Activated CD4-positive, alpha-beta memory T cell treated with anti-CD3 and anti-CD28 coated beads for 36 hours (primary cell): ENCODE measurements at regions of chr21 and their contacts with region 1.

Region 1: DNA sequence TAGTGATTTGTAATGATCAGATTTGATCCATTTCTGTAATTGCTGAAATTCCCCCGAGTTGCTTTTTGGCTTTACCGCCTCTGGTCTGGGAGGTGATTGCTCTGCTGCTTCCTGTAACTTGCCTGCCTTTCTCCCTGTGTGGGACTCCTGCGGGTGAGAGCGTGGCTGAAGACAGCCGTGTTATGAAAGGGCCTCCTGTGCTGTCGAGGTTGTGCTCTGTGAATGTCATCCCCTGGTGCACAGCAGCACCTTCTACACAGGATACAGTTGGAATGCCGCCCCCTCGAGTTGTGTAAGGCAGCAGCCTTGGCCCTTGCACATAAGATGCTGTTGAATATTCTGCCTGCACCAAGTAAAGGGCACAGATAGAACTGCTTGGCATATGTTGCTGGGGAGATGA is 5.9 kb downstream of the SOD1 start:
- DNase-seq: peak; percentile 70
- H3K4me3 Mint-ChIP-seq: no peak overlapping the region
- H3K27ac Mint-ChIP-seq: peak overlapping the region; percentile 57
- H3K4me1 Mint-ChIP-seq: peaks cover 93% of the 10 kb centered on the region
- H3K27me3 Mint-ChIP-seq: no peaks in the 10 kb centered on the region

Region 2: GRCh38 chr21:31530897-31531705 is 134.3 kb before region 1 on chr21:
- CTCF ChIA-PET with region 1: no interaction called
- POLR2A ChIA-PET with region 1: no interaction called
- intact Hi-C with region 1: no loop called
- DNase-seq: no peak
- H3K4me3 Mint-ChIP-seq: no peak overlapping the region
- H3K27ac Mint-ChIP-seq: no peak overlapping the region
- H3K4me1 Mint-ChIP-seq: peaks cover 13% of the 10 kb centered on the region
- H3K27me3 Mint-ChIP-seq: no peaks in the 10 kb centered on the region

Region 3: DNA sequence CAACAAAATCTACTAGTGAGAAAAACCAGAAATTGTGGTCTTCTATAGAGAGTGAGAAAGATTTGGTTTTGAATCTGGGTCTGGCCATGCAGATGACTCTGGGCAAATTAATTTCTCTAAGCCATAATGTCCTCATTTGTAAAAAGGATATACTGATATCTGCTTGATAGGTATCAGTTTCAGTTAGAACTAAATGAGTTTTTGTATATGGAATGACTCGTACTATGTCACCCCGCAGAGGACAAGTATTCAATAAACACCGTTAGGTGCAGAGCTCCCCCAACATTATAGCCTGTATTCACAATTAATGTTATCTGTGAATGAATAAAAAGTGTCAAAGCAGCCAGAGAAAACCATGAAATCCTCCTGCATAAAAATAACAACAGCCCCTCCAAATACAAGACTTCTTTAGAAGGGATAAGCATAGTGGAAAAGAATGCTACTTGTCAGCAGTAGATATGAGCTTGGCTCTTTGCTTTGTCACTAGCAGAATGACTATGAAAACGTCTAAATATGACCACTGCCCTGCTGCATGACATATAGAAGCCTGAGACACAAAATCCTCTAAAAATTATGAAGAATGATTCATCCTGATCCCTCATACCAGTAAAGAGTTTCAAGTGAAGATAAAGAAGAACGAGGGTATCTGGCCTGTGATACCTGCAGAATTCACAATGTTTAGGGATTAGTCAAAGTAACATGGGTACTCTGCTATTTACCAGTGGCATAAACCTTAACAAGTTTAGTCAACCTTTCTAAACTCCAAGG is 48.8 kb after region 1 on chr21:
- CTCF ChIA-PET with region 1: no interaction called
- POLR2A ChIA-PET with region 1: interaction called, 4 read pairs
- intact Hi-C with region 1: loop called (anchors 1 kb)
- DNase-seq: no peak
- H3K4me3 Mint-ChIP-seq: no peak overlapping the region
- H3K27ac Mint-ChIP-seq: peak overlapping the region; percentile 71
- H3K4me1 Mint-ChIP-seq: peaks cover 84% of the 10 kb centered on the region
- H3K27me3 Mint-ChIP-seq: no peaks in the 10 kb centered on the region